MCF 10A (cell line): ENCODE measurements at regions of chr15 and their contacts with region 1.

Region 1: DNA sequence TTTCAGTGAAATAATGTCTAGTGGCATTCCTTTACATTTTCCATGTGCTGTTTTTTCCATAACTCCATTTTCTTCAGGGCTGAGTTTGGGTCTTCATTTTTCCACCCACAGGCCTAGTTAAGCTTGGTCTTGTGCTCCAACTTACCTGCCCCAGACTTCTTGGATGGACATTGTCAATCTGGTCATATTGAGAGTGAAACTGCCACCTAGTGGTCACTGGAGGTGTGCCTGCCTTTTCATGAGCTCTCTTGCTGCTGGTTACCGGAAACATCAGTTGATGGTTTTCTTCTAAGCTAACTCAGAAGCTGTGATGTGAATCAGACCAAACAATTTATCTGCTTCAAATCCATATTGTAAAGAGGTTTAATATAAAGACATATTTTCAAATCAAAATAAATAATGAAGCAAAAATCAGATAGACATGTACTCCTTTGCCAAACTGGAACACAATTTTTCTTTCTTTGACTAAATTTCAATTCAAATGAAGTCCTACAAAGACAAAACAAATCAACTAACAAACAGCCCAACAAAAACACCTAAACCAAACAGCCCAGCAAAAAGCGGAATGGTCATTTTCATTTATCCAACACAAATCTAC is 135.1 kb upstream of the RASGRP1 start:
- DNase-seq: peak; percentile 72
- H3K4me3 Mint-ChIP-seq: no peak overlapping the region
- H3K27ac Mint-ChIP-seq: no peak overlapping the region
- H3K4me1 Mint-ChIP-seq: no peaks in the 10 kb centered on the region
- H3K27me3 Mint-ChIP-seq: no peaks in the 10 kb centered on the region
- CTCF ChIP-seq: peak; percentile 68

Region 2: DNA sequence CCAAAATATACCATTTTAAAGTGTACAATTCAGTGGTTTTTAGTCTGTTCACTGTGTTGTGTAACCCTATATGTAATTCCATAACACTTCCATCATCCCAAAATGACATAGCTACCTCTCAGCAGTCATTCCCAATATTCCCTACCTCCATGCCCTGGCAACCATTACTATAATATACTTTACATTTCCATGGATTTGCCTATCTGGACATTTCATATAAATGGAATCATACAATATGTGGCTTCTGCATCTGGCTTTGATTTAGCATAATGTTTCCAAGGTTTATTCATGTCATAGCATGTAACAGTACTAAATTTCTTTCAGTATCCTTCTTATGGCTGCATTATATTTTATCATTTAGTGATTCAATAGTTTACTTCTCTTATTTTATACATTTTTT is 220.5 kb before region 1 on chr15:
- CTCF ChIA-PET with region 1: interaction called, 21 read pairs
- POLR2A ChIA-PET with region 1: no interaction called
- intact Hi-C with region 1: no loop called
- DNase-seq: no peak
- H3K4me3 Mint-ChIP-seq: no peak overlapping the region
- H3K27ac Mint-ChIP-seq: peak overlapping the region; percentile 57
- H3K4me1 Mint-ChIP-seq: peaks cover 3% of the 10 kb centered on the region
- H3K27me3 Mint-ChIP-seq: no peaks in the 10 kb centered on the region
- CTCF ChIP-seq: no peak

Region 3: DNA sequence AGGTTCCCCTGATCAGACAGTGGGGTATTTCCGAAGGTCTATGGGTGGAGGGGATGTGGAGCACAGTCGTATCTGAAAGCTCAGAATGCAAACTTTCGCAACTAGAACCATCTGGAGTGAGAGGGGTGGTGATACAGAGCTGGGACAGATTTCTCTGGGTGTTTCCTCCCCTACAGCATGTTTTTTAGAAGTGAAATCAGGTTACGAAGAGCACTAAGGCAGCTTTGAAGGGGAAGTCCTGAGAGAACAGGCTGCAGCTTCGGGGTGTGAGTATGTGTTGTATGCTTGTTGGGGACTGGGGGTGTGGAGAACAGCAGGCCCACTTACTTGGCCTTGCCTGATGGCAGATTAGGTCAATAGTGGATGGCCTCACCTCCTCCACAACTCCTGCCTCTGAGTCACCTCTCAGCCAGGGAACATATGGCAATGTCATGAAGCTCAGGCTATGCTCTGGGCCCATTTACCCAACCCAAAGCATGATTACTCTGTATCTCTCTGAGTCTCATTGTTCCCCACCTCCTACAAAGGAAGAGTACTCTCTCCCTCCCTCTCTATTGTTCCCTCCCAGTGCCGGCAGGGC is 28.0 kb before region 1 on chr15:
- CTCF ChIA-PET with region 1: interaction called, 13 read pairs
- POLR2A ChIA-PET with region 1: no interaction called
- intact Hi-C with region 1: no loop called
- DNase-seq: no peak
- H3K4me3 Mint-ChIP-seq: no peak overlapping the region
- H3K27ac Mint-ChIP-seq: no peak overlapping the region
- H3K4me1 Mint-ChIP-seq: no peaks in the 10 kb centered on the region
- H3K27me3 Mint-ChIP-seq: peaks cover 14% of the 10 kb centered on the region
- CTCF ChIP-seq: no peak

Region 4: GRCh38 chr15:38724827-38725226 is 25.1 kb after region 1 on chr15:
- CTCF ChIA-PET with region 1: interaction called, 19 read pairs
- POLR2A ChIA-PET with region 1: no interaction called
- intact Hi-C with region 1: no loop called
- DNase-seq: no peak
- H3K4me3 Mint-ChIP-seq: no peak overlapping the region
- H3K27ac Mint-ChIP-seq: no peak overlapping the region
- H3K4me1 Mint-ChIP-seq: no peaks in the 10 kb centered on the region
- H3K27me3 Mint-ChIP-seq: no peaks in the 10 kb centered on the region
- CTCF ChIP-seq: no peak

Region 5: DNA sequence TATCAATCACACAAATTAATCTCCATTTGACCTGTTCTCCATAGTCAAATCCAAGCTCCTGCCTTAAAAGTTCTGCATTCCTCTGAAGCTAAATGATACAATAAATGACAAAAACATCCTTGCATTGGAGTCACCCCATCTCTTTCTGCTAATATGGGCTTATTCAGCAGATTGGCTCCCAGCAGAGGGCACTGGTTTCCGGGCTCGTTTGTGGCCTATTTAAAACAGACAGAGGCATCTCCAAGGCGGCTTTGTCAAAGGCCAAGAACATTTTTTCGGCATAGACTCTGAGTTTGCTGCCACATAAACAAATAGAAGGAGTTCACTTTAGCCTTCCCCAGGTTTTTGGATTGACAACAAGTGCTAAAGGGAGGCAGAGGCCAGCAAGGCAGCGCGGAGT is 69.2 kb after region 1 on chr15:
- CTCF ChIA-PET with region 1: no interaction called
- POLR2A ChIA-PET with region 1: no interaction called
- intact Hi-C with region 1: no loop called
- DNase-seq: peak; percentile 6
- H3K4me3 Mint-ChIP-seq: no peak overlapping the region
- H3K27ac Mint-ChIP-seq: no peak overlapping the region
- H3K4me1 Mint-ChIP-seq: no peaks in the 10 kb centered on the region
- H3K27me3 Mint-ChIP-seq: peaks cover 20% of the 10 kb centered on the region
- CTCF ChIP-seq: no peak